Activated naive CD4-positive, alpha-beta T cell treated with anti-CD3 and anti-CD28 coated beads for 36 hours (primary cell): ENCODE measurements at regions of chr14 and their contacts with region 1.

Region 1: GRCh38 chr14:91911474-91912032 is 35.9 kb downstream of the FBLN5 start:
- DNase-seq: peak; percentile 63
- H3K4me3 Mint-ChIP-seq: no peak overlapping the region
- H3K27ac Mint-ChIP-seq: no peak overlapping the region
- H3K4me1 Mint-ChIP-seq: peaks cover 6% of the 10 kb centered on the region
- H3K27me3 Mint-ChIP-seq: no peaks in the 10 kb centered on the region

Region 2: GRCh38 chr14:91424813-91425530 is 486.6 kb before region 1 on chr14:
- CTCF ChIA-PET with region 1: no interaction called
- intact Hi-C with region 1: loop called (anchors 5 kb)
- DNase-seq: no peak
- H3K4me3 Mint-ChIP-seq: no peak overlapping the region
- H3K27ac Mint-ChIP-seq: no peak overlapping the region
- H3K4me1 Mint-ChIP-seq: peaks cover 12% of the 10 kb centered on the region
- H3K27me3 Mint-ChIP-seq: no peaks in the 10 kb centered on the region

Region 3: GRCh38 chr14:91649930-91650329 is 261.6 kb before region 1 on chr14:
- CTCF ChIA-PET with region 1: interaction called, 13 read pairs
- intact Hi-C with region 1: loop called (anchors 2 kb)
- DNase-seq: peak; percentile 49
- H3K4me3 Mint-ChIP-seq: no peak overlapping the region
- H3K27ac Mint-ChIP-seq: no peak overlapping the region
- H3K4me1 Mint-ChIP-seq: no peaks in the 10 kb centered on the region
- H3K27me3 Mint-ChIP-seq: no peaks in the 10 kb centered on the region

Region 4: GRCh38 chr14:91893007-91893406 is 18.5 kb before region 1 on chr14:
- CTCF ChIA-PET with region 1: interaction called, 15 read pairs
- intact Hi-C with region 1: no loop called
- DNase-seq: peak; percentile 62
- H3K4me3 Mint-ChIP-seq: no peak overlapping the region
- H3K27ac Mint-ChIP-seq: peak overlapping the region; percentile 92
- H3K4me1 Mint-ChIP-seq: peaks cover 56% of the 10 kb centered on the region
- H3K27me3 Mint-ChIP-seq: no peaks in the 10 kb centered on the region

Region 5: DNA sequence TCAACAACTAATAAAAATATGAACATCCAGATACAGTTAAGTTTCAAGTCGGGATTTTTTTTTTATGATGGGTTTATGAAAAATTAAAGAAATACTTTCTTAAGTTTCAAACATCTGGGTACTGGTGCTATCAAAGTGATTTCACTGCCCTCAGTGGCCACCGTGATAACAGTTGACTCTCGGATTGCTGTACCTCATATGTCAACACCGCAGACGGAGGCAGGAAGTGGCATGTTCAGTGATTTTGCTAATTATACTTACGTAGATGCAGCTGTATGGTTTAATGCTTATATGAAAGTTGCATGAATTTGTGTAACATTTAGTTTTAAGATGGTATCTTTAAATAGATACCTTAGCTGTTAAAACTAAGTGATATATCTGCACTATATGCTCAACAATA is 56.7 kb after region 1 on chr14:
- CTCF ChIA-PET with region 1: no interaction called
- intact Hi-C with region 1: no loop called
- DNase-seq: peak; percentile 51
- H3K4me3 Mint-ChIP-seq: no peak overlapping the region
- H3K27ac Mint-ChIP-seq: no peak overlapping the region
- H3K4me1 Mint-ChIP-seq: peaks cover 7% of the 10 kb centered on the region
- H3K27me3 Mint-ChIP-seq: no peaks in the 10 kb centered on the region

Region 6: GRCh38 chr14:91996948-91997371 is 85.4 kb after region 1 on chr14:
- CTCF ChIA-PET with region 1: interaction called, 12 read pairs
- intact Hi-C with region 1: loop called (anchors 5 kb)
- DNase-seq: no peak
- H3K4me3 Mint-ChIP-seq: no peak overlapping the region
- H3K27ac Mint-ChIP-seq: no peak overlapping the region
- H3K4me1 Mint-ChIP-seq: peaks cover 38% of the 10 kb centered on the region
- H3K27me3 Mint-ChIP-seq: no peaks in the 10 kb centered on the region